Activated CD4-positive, alpha-beta T cell treated with anti-CD3 and anti-CD28 coated beads for 36 hours (primary cell): ENCODE measurements at regions of chr2 and their contacts with region 1.

Region 1: GRCh38 chr2:231604685-231605606 is 12.3 kb downstream of the TEX44 start:
- DNase-seq: peak; percentile 98
- ATAC-seq: peak; percentile 81
- H3K4me3 Mint-ChIP-seq: peak overlapping the region; percentile 26
- H3K27ac Mint-ChIP-seq: no peak overlapping the region
- H3K4me1 Mint-ChIP-seq: peaks cover 6% of the 10 kb centered on the region
- H3K27me3 Mint-ChIP-seq: peaks cover 2% of the 10 kb centered on the region

Region 2: DNA sequence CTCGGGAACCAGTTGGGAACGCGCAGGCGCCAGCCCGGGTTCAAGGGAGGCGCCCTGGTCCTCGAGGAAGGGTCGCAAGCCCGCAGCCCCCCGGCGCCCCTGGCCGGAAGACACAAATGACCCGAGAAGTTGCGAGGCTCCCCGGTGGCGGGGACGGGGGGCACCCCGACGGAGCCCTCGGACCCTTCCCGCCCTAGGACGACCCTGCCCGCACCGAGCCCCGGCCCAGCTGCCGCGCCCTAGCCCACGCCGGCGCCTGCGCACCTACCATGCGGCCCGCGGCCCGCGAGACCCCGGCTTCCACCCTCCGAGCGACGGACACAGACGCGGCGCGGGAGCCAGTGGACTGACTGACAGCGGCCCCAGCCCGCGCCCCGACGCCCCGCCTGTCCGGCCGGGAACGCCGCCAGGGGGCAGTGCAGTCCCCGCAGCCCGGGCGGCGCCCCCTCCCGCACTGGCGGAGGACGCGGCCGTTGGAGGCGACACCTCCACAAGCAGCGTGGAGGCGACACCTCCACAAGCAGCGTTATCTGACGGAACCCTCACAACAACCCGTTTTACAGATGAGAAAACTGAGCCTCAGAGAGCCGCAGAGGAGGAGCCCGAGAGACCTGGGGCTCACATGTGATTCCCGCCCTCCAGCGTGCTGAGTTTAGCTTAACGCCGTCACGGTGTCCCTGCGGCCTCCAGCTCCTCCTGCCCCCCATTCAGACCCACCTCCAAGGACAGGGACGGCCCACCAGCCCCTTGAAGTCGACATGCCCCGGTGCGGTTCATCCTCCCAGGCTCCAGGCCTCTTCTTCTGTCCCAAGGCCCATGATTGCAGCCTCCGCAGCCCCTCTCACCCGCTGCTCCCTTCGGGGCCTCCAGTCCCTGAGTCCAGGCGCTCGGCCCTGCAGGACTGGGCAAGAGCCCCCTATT is 74.6 kb before region 1 on chr2 and contains the start of gene NMUR1:
- CTCF ChIA-PET with region 1: interaction called, 4 read pairs
- POLR2A ChIA-PET with region 1: no interaction called
- intact Hi-C with region 1: loop called in 1 of 2 experiments (anchors 1 kb)
- DNase-seq: peak; percentile 85
- ATAC-seq: peak; percentile 98
- H3K4me3 Mint-ChIP-seq: no peak within 1 kb of the TSS
- H3K27ac Mint-ChIP-seq: no peak within 1 kb of the TSS
- H3K4me1 Mint-ChIP-seq: peaks cover 7% of the 10 kb centered on the region
- H3K27me3 Mint-ChIP-seq: peaks cover 24% of the 10 kb centered on the region
- total RNA-seq, gene NMUR1: not detected

Region 3: DNA sequence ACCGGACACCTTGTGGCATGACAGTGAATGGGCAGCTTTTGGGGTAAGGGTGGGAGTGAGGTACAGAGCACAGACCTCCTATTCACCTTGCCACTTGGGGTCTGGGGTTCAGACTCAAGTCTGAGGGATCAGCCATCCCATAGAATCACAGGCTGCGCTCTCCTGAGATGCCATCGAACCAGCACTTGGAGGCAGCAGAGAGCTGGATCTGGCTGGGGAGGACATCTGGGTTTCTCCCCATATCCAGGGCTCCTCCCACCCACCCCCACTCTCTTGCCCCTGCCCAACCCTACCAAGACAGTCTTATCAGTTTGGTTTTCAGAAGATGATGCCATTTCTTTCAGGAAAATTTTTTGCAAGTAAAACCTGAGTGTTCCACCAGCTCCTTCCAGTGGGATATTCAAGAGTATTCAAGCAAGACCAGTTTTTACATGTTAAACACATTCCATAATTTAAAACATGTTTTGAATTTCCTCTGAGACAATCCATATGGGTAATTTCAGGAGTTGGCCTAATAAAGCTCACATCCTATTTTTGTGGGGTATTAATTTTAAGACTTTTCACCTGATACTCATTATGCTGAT is 41.5 kb before region 1 on chr2:
- CTCF ChIA-PET with region 1: interaction called, 60 read pairs
- POLR2A ChIA-PET with region 1: interaction called, 3 read pairs
- intact Hi-C with region 1: loop called (anchors 1 kb)
- DNase-seq: peak; percentile 79
- ATAC-seq: peak; percentile 99
- H3K4me3 Mint-ChIP-seq: no peak overlapping the region
- H3K27ac Mint-ChIP-seq: no peak overlapping the region
- H3K4me1 Mint-ChIP-seq: peaks cover 2% of the 10 kb centered on the region
- H3K27me3 Mint-ChIP-seq: no peaks in the 10 kb centered on the region

Region 4: DNA sequence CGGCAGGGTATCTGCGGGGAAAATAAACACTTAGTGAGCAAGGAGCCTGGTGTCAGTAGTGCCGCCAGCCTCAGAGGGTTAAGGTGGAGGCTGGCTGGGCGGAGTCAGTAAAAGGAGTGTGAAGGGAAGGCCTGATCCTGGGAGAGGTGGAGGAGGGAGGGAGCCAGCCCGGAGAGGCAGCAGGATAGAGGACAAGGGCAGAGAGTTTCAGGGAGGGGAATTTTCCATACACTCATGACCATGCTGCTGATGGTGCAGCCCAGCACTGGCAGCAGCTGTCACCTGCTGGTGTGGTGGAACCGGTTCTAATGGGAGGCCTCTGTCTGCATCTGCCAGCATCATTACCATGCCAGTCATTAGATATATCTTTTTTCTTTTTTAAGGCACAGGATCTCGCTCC is 14.3 kb before region 1 on chr2:
- CTCF ChIA-PET with region 1: interaction called, 14 read pairs
- POLR2A ChIA-PET with region 1: no interaction called
- intact Hi-C with region 1: no loop called
- DNase-seq: no peak
- ATAC-seq: no peak
- H3K4me3 Mint-ChIP-seq: no peak overlapping the region
- H3K27ac Mint-ChIP-seq: no peak overlapping the region
- H3K4me1 Mint-ChIP-seq: no peaks in the 10 kb centered on the region
- H3K27me3 Mint-ChIP-seq: no peaks in the 10 kb centered on the region

Region 5: GRCh38 chr2:231662028-231662810 is 57.3 kb after region 1 on chr2:
- CTCF ChIA-PET with region 1: no interaction called
- POLR2A ChIA-PET with region 1: no interaction called
- intact Hi-C with region 1: loop called in 1 of 2 experiments (anchors 2 kb)
- DNase-seq: peak; percentile 98
- ATAC-seq: peak; percentile 92
- H3K4me3 Mint-ChIP-seq: peak overlapping the region; percentile 72
- H3K27ac Mint-ChIP-seq: peak overlapping the region; percentile 96
- H3K4me1 Mint-ChIP-seq: peaks cover 23% of the 10 kb centered on the region
- H3K27me3 Mint-ChIP-seq: no peaks in the 10 kb centered on the region